ENCODE measurements at regions of chrX and their contacts with region 1.

Region 1: GRCh38 chrX:38985375-38985774 is 184.1 kb downstream of the MID1IP1 start:
- DNase-seq: no peak
- H3K4me3 ChIP-seq: no peak overlapping the region
- H3K27ac ChIP-seq: no peak overlapping the region
- H3K4me1 ChIP-seq: no peaks in the 10 kb centered on the region
- H3K27me3 ChIP-seq: no peaks in the 10 kb centered on the region
- CTCF ChIP-seq: peak in 2 of 3 experiments; percentile 24 to 29
- EP300 ChIP-seq: no peak
- POLR2A ChIP-seq: no peak

Region 2: DNA sequence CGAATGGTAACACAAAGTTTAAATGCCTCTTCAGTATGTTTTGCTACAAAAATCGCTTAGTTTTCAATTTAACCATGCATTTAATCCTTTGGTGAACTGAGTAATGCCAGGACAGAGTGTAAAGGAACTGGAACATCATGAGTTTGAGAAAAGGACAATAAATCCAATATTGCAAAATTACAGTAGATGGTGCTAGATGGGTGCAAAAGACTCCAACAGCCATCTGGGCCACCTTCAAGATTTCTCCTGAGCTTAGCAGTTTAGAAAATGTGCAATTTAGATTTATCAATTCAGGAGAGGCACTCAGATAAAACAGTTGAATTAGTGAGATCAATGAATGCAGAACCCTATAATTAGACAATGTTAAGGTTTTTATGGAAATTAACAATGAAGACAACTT is 217.3 kb before region 1 on chrX:
- intact Hi-C with region 1: loop called (anchors 10 kb)
- DNase-seq: no peak
- H3K4me3 ChIP-seq: no peak overlapping the region
- H3K27ac ChIP-seq: no peak overlapping the region
- H3K4me1 ChIP-seq: no peaks in the 10 kb centered on the region
- H3K27me3 ChIP-seq: no peaks in the 10 kb centered on the region
- CTCF ChIP-seq: peak; percentile 27 to 44 (median 35)
- EP300 ChIP-seq: no peak
- POLR2A ChIP-seq: no peak